Left cardiac atrium (tissue), 4 donors: ENCODE measurements at regions of chr18 and their contacts with region 1.

Region 1: DNA sequence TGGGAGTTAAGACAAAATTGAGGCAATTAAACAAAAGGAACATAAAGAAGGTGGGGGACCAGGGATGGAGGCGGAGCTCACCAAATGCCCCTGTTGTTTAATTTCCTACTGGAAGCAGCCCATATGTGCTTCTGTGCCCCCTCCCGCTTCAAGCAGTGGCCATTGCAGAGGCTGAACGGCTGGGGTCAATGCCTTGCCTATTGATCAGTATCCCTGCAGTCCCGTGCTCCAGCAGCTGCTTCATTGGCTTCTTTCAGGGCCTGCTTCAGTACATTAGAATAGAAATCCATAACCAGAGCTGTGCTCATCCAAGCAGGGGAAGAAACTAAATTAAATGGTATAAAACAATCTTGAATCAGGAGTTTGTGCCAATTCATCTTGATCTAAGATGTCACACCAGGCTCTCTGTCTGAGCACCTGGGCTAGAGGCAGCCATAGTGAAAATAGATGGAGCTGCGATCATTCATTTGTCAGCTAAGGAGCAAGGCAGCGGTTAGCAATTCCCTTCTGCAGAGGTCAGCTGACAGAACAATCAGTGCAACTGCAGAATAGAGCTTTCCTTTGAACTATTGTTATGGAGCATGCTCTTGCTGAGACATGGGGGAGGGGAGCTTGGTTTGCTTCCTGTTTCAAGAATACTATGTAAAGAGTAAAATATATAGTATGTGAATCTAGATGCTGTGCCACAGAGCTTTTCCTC is 222.4 kb downstream of the WDR7 start:
- DNase-seq: no peak
- ATAC-seq: no peak

Region 2: DNA sequence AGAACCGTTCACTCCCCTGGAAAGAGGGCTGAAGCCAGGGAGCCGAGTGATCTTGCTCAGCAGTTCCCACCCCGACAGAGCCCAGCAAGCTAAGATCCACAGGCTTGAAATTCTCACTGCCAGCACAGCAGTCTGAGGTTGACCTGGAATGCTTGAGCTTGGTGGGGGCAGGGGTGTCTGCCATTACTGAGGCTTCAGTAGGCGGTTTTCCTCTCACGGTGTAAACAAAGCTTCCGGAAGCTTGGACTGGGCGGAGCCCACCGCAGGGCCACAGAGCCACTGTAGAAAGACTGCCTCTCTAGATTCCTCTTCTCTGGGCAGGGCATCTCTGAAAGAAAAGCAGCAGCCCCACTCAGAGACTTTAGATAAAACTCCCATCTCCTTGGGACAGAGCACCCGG is 41.6 kb before region 1 on chr18:
- intact Hi-C with region 1: no loop called
- DNase-seq: no peak
- ATAC-seq: no peak

Region 3: DNA sequence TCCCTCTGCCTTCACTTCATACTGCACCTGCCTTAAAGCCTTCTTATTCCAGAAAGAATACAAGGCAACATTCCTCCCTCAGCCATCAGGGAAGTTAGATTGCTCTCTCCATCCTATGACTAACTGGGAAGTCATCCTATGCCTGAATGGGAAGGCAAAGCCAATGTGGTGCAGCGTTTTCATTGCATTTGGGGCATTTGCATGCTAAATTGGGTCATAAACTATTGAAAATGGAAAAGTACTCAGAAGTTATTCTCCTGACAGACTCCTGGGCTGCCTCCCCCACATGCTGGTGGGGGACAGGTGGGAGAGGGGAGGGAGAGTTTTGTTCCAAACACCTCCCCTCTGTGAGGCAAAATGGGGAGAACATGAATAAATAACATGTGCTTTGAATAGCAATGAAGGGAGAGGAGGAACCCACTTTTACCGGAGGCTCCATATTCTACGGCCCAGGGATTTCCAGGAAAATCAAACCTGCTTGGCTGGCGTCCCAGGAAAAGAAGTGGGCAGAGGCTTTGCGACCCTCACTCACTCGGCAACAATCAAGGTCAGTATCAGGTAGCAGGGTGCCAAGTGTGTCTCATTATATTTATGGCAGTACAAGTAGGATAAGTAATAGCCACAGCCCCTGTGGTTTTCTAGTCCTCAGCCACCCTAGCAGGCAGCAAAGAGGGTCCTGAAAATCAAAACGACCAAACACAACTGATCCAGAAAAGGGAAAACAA is 357.4 kb after region 1 on chr18:
- intact Hi-C with region 1: no loop called
- DNase-seq: no peak
- ATAC-seq: no peak

Region 4: DNA sequence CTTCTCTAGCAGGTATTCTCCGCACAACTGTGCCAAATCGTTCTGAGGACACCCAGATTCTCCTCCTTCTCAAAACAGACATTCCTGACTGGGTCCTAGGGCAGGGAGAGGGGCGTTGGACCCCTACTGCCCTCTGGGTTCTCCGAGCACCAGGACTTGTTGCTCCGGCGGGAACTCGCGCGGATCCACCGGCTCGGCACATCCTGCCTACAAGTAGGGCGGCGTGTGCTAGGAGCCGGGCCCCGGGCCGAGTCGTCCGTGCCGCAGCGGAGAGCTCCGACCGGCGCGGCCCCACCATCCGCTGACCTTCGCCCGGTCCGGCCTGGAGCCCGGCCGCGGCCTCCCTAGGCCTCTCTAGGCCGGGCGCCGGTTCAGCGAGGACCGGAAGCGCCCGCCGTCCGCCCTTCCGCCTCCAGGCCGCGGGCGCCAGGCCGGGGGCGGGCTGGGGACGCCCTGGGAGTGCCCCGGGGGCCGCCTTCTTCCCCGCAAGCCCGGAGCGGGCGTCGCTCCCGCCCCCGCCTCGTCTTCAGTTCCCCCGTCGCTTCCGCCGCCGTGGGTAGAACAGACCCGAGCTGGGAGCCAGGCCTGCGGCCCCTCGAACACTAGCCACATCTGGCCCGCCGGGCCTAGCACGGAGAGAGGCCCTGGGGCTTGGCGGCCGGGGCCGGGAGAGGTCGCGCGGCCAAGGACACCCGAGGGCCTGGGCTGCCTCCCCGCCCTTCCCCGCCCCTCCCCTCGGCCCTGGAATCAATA is 554.0 kb after region 1 on chr18:
- intact Hi-C with region 1: loop called in 1 of 2 experiments (anchors 5 kb)
- DNase-seq: no peak
- ATAC-seq: peak; percentile 61 to 74